Activated naive CD4-positive, alpha-beta T cell treated with anti-CD3 and anti-CD28 coated beads, Interleukin-2, amount 10 ng/mL, durations not matched to agents 7 days and 5 days (primary cell): ENCODE measurements at regions of chr5 and their contacts with region 1.

Region 1: DNA sequence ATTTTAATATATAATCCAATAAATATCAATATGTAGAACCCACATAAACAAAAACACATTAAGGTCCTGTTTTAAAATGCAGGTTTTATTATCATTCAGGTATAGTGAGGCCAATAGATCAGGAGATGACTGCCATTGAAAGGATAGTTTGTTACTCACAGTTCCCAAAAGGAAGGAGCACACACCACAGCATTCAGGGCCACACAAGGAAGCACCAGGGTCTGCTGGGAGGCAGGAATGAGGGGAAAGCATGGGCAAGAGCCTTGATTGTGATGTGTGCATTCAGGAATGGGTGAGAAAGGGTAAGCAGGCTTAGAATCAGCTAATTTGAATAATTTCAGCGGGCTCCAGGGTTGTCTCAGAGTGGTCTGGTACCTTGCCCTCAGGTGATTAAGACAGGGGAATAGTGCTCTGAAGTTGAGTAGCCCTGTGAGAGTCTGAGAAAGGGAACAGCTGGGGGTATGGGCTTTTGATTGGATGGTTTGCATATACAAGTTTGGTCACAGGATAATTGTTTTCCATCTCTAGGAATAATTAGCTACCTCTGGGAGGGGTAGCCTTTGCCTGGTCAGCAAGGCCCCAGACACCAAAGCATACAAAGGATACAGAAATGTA is 19.8 kb upstream of the OTULIN start:
- DNase-seq: no peak
- H3K4me3 Mint-ChIP-seq: no peak overlapping the region
- H3K27ac Mint-ChIP-seq: no peak overlapping the region
- H3K4me1 Mint-ChIP-seq: peaks cover 9% of the 10 kb centered on the region
- H3K27me3 Mint-ChIP-seq: peaks cover 28% of the 10 kb centered on the region

Region 2: DNA sequence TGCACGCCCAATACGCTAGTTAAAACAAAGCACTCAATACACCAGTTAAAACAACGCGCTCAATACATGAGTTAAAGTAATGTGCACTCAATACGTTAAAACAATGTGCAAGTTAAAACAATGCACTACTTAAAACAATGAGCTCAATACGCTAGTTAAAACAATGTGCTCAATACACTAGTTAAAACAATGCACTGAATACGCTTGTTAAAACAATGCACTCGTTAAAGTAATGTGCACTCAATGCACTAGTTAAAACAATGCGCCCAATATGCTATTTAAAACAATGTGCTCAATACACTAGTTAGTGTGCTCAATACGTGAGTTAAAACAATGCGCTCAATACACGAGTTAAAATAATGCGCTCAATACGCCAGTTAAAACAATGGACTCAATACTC is 316.6 kb before region 1 on chr5:
- CTCF ChIA-PET with region 1: interaction called, 10 read pairs
- DNase-seq: no peak
- H3K4me3 Mint-ChIP-seq: no peak overlapping the region
- H3K27ac Mint-ChIP-seq: no peak overlapping the region
- H3K4me1 Mint-ChIP-seq: peaks cover 21% of the 10 kb centered on the region
- H3K27me3 Mint-ChIP-seq: peaks cover 8% of the 10 kb centered on the region

Region 3: DNA sequence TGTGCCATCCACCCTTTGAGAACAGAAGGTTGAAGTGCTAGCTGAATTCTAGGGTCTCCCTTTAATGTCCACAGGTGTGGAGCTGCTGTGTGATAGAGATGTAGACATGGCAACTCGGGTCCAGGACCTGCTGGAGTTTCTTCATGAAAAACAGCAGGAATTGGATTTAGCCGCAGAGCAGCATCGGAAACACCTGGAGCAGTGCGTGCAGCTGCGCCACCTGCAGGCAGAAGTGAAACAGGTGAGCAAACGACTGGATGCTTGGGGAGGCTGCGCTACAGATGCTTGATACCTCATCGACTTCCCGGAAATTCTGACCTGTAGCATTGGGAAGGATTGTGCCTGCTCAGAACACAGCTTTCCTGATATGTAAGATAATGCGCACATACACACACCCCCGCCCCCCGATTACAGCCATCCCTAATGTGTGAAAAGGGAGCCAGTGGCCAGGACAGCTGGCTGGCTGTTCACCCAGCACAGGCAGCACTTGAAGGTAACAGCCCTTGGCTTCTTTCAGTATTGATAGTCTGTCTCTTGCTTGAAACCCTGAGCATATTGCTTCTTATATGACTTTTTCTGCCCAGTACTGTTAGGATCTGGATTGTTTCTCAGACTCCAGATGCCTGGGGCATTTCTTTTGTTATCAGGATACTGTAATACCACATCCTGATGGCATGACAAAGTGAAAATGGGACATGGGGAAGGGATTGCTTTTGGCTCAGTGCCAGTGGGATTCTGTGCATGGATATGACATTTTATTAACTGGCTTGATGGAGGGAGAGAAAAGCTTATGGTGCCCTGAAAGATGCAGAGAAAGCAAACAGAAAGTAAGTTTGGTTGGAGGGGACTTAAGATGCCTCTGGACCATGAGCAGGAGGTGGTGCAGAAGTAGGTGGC is 279.9 kb before region 1 on chr5:
- CTCF ChIA-PET with region 1: interaction called, 240 read pairs
- DNase-seq: no peak
- H3K4me3 Mint-ChIP-seq: no peak overlapping the region
- H3K27ac Mint-ChIP-seq: peak overlapping the region; percentile 89
- H3K4me1 Mint-ChIP-seq: peaks cover 58% of the 10 kb centered on the region
- H3K27me3 Mint-ChIP-seq: peaks cover 9% of the 10 kb centered on the region

Region 4: DNA sequence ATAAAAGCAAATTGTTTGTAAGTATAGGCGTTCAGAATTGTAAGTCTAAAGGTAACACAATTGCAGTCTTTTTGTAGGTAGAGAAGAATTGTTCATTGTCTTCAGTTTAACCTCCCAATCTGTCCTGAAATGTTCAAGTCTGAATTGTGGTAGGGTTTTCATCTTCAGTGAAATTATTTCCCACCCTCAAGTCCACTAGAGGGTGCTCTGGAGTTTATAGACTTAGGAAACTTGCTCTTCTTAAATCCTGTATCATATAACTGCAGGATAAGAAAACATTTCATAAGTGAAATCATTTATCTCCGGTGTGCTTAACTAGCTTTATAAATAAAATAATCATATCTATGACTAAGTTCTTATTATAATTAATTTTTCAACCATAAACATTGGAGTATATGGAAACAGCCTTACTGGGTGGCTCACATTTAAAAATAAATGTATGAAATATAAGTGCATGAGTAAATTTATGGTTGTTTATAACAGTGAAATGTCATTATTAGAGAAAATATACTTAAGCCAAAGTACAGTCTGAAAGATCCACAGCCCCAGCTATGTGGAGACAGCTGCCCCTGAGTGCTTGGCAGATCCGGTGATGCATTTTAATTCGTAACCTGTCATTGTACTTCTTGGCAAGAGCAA is 245.6 kb before region 1 on chr5:
- CTCF ChIA-PET with region 1: interaction called, 116 read pairs
- DNase-seq: peak; percentile 44
- H3K4me3 Mint-ChIP-seq: no peak overlapping the region
- H3K27ac Mint-ChIP-seq: no peak overlapping the region
- H3K4me1 Mint-ChIP-seq: peaks cover 59% of the 10 kb centered on the region
- H3K27me3 Mint-ChIP-seq: peaks cover 8% of the 10 kb centered on the region

Region 5: DNA sequence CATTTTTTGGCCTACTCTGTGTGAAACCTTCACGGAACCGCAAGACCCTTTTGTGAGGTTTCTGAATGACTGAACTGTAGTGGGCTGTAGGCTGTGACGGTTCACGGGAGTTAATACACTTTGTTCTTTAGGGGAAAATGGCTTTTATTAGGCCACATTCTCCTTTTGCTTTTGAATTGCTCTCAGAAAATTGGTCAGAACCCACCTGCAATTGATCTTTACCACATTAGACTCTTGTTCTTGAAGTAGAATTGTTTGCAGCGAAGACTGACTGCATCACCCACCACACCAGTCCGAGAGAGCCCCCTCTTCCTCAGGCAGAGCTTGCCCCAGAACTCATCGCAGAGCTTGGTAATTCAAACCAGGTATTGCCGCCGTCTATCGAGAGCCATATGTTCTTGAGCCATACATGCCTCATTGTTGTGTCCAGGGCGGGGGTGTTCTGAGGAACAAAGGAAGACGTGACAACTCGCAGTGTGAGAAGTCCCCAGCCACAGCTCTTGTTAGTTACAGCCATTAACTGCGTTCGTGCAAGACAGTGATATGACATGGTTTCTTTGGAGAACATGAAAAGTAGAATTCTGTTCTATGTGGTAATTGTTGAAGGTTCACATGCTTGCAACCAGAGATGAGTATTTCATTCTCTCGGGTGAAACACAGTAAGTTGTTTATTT is 229.6 kb before region 1 on chr5:
- CTCF ChIA-PET with region 1: interaction called, 12 read pairs
- DNase-seq: peak; percentile 26
- H3K4me3 Mint-ChIP-seq: peak overlapping the region; percentile 24
- H3K27ac Mint-ChIP-seq: peak overlapping the region; percentile 98
- H3K4me1 Mint-ChIP-seq: peaks cover 56% of the 10 kb centered on the region
- H3K27me3 Mint-ChIP-seq: peaks cover 6% of the 10 kb centered on the region

Region 6: GRCh38 chr5:14581333-14581890 is 63.3 kb before region 1 on chr5 and contains the start of gene OTULINL:
- CTCF ChIA-PET with region 1: interaction called, 14 read pairs
- DNase-seq: peak; percentile 91
- H3K4me3 Mint-ChIP-seq: peak within 1 kb of the TSS; percentile 84
- H3K27ac Mint-ChIP-seq: peak within 1 kb of the TSS; percentile 88
- H3K4me1 Mint-ChIP-seq: peaks cover 39% of the 10 kb centered on the region
- H3K27me3 Mint-ChIP-seq: peaks cover 25% of the 10 kb centered on the region